ENCODE measurements at regions of chr3 and their contacts with region 1.

Region 1: GRCh38 chr3:47380601-47381316 is at the start of gene PTPN23:
- DNase-seq: peak; percentile 99
- ATAC-seq: peak; percentile 81
- H3K4me3 Mint-ChIP-seq: peak within 1 kb of the TSS; percentile 86
- H3K27ac Mint-ChIP-seq: peak within 1 kb of the TSS; percentile 99
- H3K4me1 Mint-ChIP-seq: peaks cover 39% of the 10 kb centered on the region
- H3K27me3 Mint-ChIP-seq: no peaks in the 10 kb centered on the region
- total RNA-seq, gene PTPN23: 25.9 to 29.4 TPM

Region 2: GRCh38 chr3:46469680-46470357 is 910.9 kb before region 1 on chr3:
- CTCF ChIA-PET with region 1: no interaction called
- POLR2A ChIA-PET with region 1: no interaction called
- intact Hi-C with region 1: no loop called
- DNase-seq: no peak
- ATAC-seq: no peak
- H3K4me3 Mint-ChIP-seq: no peak overlapping the region
- H3K27ac Mint-ChIP-seq: no peak overlapping the region
- H3K4me1 Mint-ChIP-seq: no peaks in the 10 kb centered on the region
- H3K27me3 Mint-ChIP-seq: peaks cover 20% of the 10 kb centered on the region

Region 3: DNA sequence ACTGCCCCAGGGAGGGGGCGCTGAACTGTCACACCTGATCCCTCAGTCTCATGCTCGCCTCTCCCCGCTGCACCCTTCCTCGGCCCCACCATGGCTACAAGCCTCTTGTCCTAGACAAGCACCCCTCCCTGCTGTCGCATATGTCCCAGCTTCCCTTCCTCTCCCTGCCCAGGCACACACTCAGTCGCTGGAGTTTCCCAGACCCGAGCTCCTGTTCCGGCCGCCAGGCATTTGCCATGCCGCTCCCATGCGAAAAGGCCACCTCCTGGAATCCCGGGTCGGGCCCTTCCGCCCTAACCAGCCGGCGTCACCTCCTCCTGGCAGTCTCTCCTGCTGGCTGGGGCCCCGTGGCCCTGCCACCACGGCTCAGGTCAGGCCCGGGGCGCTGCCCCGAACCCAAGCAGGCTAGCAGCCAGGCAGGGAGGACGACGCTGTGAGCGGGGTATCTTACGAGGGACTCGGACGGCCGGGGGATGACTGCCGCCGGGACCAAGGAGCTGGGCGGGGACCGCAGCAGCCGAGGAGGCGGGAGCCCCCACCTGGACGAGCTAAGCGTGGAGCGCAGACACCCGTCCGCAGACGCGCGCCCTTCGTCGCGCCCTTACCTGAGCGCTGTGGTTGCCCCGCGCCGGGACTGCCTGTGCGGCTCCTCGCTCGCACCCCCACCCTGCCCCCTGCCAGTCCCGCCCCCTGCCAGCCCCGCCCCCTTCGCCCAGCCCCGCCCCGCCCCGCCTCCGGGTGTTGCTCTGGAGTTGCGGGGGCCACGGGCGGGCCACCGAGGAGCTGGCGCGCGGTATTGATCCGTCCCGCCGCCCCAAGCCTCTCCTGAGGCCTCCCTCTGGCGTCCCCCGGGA is 687.5 kb before region 1 on chr3 and contains the start of gene ALS2CL:
- CTCF ChIA-PET with region 1: no interaction called
- POLR2A ChIA-PET with region 1: no interaction called
- intact Hi-C with region 1: loop called in 1 of 2 experiments (anchors 5 kb)
- DNase-seq: peak; percentile 80
- ATAC-seq: peak; percentile 64
- H3K4me3 Mint-ChIP-seq: peak within 1 kb of the TSS; percentile 73
- H3K27ac Mint-ChIP-seq: peak within 1 kb of the TSS; percentile 55
- H3K4me1 Mint-ChIP-seq: peaks cover 50% of the 10 kb centered on the region
- H3K27me3 Mint-ChIP-seq: no peaks in the 10 kb centered on the region
- total RNA-seq, gene ALS2CL: 3.2 to 3.3 TPM

Region 4: GRCh38 chr3:47016934-47017435 is 363.8 kb before region 1 on chr3:
- CTCF ChIA-PET with region 1: no interaction called
- POLR2A ChIA-PET with region 1: no interaction called
- intact Hi-C with region 1: loop called (anchors 2 to 10 kb)
- DNase-seq: peak; percentile 62
- ATAC-seq: peak; percentile 79
- H3K4me3 Mint-ChIP-seq: peak overlapping the region; percentile 24
- H3K27ac Mint-ChIP-seq: peak overlapping the region; percentile 85
- H3K4me1 Mint-ChIP-seq: peaks cover 46% of the 10 kb centered on the region
- H3K27me3 Mint-ChIP-seq: no peaks in the 10 kb centered on the region

Region 5: DNA sequence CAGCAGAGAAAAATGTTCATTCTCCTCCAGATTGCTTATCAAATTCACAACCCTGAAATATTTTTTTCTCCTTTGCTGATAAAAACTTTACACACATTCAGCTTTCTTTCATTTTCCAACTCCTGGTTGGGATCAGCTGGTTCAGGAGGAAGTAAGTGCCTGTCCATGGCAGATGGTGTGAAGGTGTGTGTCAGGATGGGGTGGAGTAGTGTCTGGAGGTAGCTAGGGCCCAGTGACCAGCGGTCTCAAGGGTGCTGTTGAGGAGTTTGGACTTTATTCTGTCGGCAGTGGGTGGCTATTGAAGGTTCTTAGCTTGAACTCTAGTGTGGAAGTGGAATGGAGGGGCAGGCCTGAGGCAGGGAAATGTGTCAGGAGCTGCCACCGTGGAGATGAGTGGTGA is 46.9 kb before region 1 on chr3:
- CTCF ChIA-PET with region 1: no interaction called
- POLR2A ChIA-PET with region 1: no interaction called
- intact Hi-C with region 1: loop called in 1 of 2 experiments (anchors 5 kb)
- DNase-seq: no peak
- ATAC-seq: no peak
- H3K4me3 Mint-ChIP-seq: no peak overlapping the region
- H3K27ac Mint-ChIP-seq: no peak overlapping the region
- H3K4me1 Mint-ChIP-seq: no peaks in the 10 kb centered on the region
- H3K27me3 Mint-ChIP-seq: no peaks in the 10 kb centered on the region

Region 6: GRCh38 chr3:47420511-47421484 is 40.0 kb after region 1 on chr3:
- CTCF ChIA-PET with region 1: interaction called, 7 read pairs
- POLR2A ChIA-PET with region 1: interaction called, 4 read pairs
- intact Hi-C with region 1: loop called in 1 of 2 experiments (anchors 1 kb)
- DNase-seq: peak; percentile 95
- ATAC-seq: peak; percentile 97
- H3K4me3 Mint-ChIP-seq: peak overlapping the region; percentile 17
- H3K27ac Mint-ChIP-seq: peak overlapping the region; percentile 99
- H3K4me1 Mint-ChIP-seq: peaks cover 10% of the 10 kb centered on the region
- H3K27me3 Mint-ChIP-seq: no peaks in the 10 kb centered on the region

Region 7: GRCh38 chr3:47802734-47803477 is 422.1 kb after region 1 on chr3 and contains the start of gene DHX30:
- CTCF ChIA-PET with region 1: no interaction called
- POLR2A ChIA-PET with region 1: interaction called, 3 read pairs
- intact Hi-C with region 1: loop called in 1 of 2 experiments (anchors 1 kb)
- DNase-seq: peak; percentile 93
- ATAC-seq: peak; percentile 92
- H3K4me3 Mint-ChIP-seq: peak within 1 kb of the TSS; percentile 96
- H3K27ac Mint-ChIP-seq: peak within 1 kb of the TSS; percentile 98
- H3K4me1 Mint-ChIP-seq: peaks cover 24% of the 10 kb centered on the region
- H3K27me3 Mint-ChIP-seq: no peaks in the 10 kb centered on the region
- total RNA-seq, gene DHX30: 81.6 to 82.3 TPM